B cell (primary cell): ENCODE measurements at regions of chr17 and their contacts with region 1.

Region 1: GRCh38 chr17:49414622-49415350 is at the start of gene PHB1:
- DNase-seq: peak; percentile 96
- ATAC-seq: peak; percentile 98
- H3K4me3 ChIP-seq: peak within 1 kb of the TSS; percentile 51 to 93 (median 75)
- H3K4me3 Mint-ChIP-seq: peak within 1 kb of the TSS; percentile 94
- H3K27ac ChIP-seq: peak within 1 kb of the TSS in 1 of 2 donors; percentile 72
- H3K27ac Mint-ChIP-seq: peak within 1 kb of the TSS; percentile 84
- H3K4me1 ChIP-seq: peaks cover 7 to 17% of the 10 kb centered on the region in 2 donors
- H3K4me1 Mint-ChIP-seq: peaks cover 22% of the 10 kb centered on the region
- H3K27me3 ChIP-seq: no peaks in the 10 kb centered on the region
- H3K27me3 Mint-ChIP-seq: no peaks in the 10 kb centered on the region
- CTCF ChIP-seq: no peak
- total RNA-seq, gene PHB1: 72.3 and 73.6 TPM in 2 replicates

Region 2: GRCh38 chr17:49496183-49496866 is 81.5 kb after region 1 on chr17:
- CTCF ChIA-PET with region 1: no interaction called
- POLR2A ChIA-PET with region 1: no interaction called
- intact Hi-C with region 1: loop called (anchors 2 kb)
- DNase-seq: peak; percentile 88
- ATAC-seq: peak; percentile 75
- H3K4me3 ChIP-seq: peak overlapping the region in 4 of 5 experiments; percentile 54 to 74 (median 58)
- H3K4me3 Mint-ChIP-seq: peak overlapping the region; percentile 87
- H3K27ac ChIP-seq: no peak overlapping the region
- H3K27ac Mint-ChIP-seq: no peak overlapping the region
- H3K4me1 ChIP-seq: peaks cover 30 to 34% of the 10 kb centered on the region in 2 donors
- H3K4me1 Mint-ChIP-seq: peaks cover 29% of the 10 kb centered on the region
- H3K27me3 ChIP-seq: peaks cover 0 to 53% (median 43%) of the 10 kb centered on the region in 4 experiments
- H3K27me3 Mint-ChIP-seq: peaks cover 41% of the 10 kb centered on the region
- CTCF ChIP-seq: peak; percentile 92

Region 3: GRCh38 chr17:49515196-49515770 is 100.5 kb after region 1 on chr17:
- CTCF ChIA-PET with region 1: no interaction called
- POLR2A ChIA-PET with region 1: no interaction called
- intact Hi-C with region 1: no loop called
- DNase-seq: no peak
- ATAC-seq: no peak
- H3K4me3 ChIP-seq: no peak overlapping the region
- H3K4me3 Mint-ChIP-seq: no peak overlapping the region
- H3K27ac ChIP-seq: no peak overlapping the region
- H3K27ac Mint-ChIP-seq: no peak overlapping the region
- H3K4me1 ChIP-seq: no peaks in the 10 kb centered on the region
- H3K4me1 Mint-ChIP-seq: no peaks in the 10 kb centered on the region
- H3K27me3 ChIP-seq: peaks cover 0 to 2% (median 0%) of the 10 kb centered on the region in 4 experiments
- H3K27me3 Mint-ChIP-seq: peaks cover 18% of the 10 kb centered on the region
- CTCF ChIP-seq: no peak

Region 4: DNA sequence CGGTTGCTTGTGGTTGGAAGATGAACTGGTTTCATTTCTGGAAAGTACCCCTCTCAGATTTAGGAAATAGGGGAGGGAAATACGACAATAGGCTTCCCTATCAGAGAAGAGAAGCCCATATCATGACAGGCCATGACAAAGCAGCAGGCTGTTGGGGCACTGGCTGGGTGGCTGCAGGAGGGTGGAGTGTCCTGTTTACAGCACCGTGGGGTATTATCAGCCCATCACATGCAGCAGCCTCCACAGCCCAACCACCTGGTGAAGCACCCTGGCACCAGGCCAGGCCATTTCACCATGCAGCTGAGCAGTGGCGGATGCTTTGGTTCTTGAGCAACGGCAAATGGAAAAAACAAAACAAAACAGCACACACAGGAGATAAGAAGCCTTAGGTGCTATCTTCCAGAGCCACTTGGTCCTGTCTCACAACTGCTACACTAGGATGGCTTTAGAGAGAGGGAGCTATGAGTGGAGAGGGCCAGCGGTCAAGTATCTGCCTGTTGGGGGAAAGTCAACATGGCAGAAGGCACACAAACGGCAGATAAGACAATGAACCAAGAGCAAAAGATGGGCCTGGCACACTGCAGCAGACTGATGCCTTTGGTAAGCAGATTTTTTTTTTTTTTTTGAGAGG is 325.0 kb after region 1 on chr17:
- CTCF ChIA-PET with region 1: no interaction called
- POLR2A ChIA-PET with region 1: interaction called, 11 read pairs
- intact Hi-C with region 1: no loop called
- DNase-seq: peak; percentile 97
- ATAC-seq: peak; percentile 96
- H3K4me3 ChIP-seq: peak overlapping the region; percentile 4 to 57 (median 52)
- H3K4me3 Mint-ChIP-seq: peak overlapping the region; percentile 95
- H3K27ac ChIP-seq: peak overlapping the region; percentile 89 to 98
- H3K27ac Mint-ChIP-seq: peak overlapping the region; percentile 100
- H3K4me1 ChIP-seq: peaks cover 76 to 84% of the 10 kb centered on the region in 2 donors
- H3K4me1 Mint-ChIP-seq: peaks cover 85% of the 10 kb centered on the region
- H3K27me3 ChIP-seq: no peaks in the 10 kb centered on the region
- H3K27me3 Mint-ChIP-seq: no peaks in the 10 kb centered on the region
- CTCF ChIP-seq: no peak